Dendritic cell treated with granulocyte-macrophage colony-stimulating factor and Interleukin-4, amounts not matched to agents 40 ng/mL and 50 ng/mL, for 4 days (primary cell): ENCODE measurements at regions of chr3 and their contacts with region 1.

Region 1: GRCh38 chr3:73045391-73045790 is 16.1 kb upstream of the EBLN2 start:
- H3K4me3 Mint-ChIP-seq: no peak overlapping the region
- H3K27ac Mint-ChIP-seq: no peak overlapping the region
- H3K4me1 Mint-ChIP-seq: peaks cover 22% of the 10 kb centered on the region
- H3K27me3 Mint-ChIP-seq: no peaks in the 10 kb centered on the region

Region 2: GRCh38 chr3:72288955-72289691 is 756.3 kb before region 1 on chr3:
- intact Hi-C with region 1: no loop called
- H3K4me3 Mint-ChIP-seq: peak overlapping the region; percentile 63
- H3K27ac Mint-ChIP-seq: no peak overlapping the region
- H3K4me1 Mint-ChIP-seq: peaks cover 12% of the 10 kb centered on the region
- H3K27me3 Mint-ChIP-seq: peaks cover 73% of the 10 kb centered on the region

Region 3: DNA sequence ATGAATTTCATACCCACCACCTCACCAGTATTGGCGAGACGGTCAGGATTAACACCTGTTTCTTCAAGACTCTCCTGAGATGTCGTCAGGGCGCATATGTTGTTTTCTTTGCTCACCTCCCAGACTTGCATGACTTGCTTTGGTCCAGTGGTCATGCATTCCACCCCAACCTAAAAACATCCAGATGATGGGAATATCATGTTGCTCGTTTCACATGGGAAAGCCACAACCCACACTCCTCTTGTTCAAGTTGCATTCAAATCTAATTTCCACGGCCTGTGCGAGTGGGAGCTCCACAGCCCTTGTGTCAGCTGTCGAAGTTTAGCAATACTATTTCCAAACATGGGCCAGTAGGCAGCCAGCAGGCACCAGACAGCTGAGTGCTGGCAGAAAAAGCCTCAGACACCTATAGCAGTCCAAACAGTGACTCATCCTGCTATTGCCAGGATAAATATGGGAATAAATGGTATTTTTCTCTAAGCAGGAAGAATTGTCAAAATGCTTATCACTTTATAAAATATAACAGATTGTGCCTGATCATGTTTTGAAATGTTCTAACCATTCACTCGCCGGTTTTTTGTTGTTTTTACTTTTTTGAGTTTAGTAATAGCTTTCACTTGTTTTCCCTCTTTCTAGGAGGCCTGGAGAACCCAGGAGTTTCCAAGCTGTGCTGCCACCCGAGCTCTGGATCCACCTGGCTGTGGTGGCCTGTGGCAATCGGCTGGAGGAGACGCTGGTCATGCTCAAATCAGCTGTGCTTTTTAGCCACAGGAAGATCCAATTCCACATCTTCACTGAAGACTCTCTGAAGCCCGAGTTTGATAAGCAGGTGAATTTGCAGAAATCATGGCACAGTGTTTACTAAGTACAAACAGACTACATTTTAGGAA is 137.4 kb before region 1 on chr3:
- intact Hi-C with region 1: no loop called
- H3K4me3 Mint-ChIP-seq: no peak overlapping the region
- H3K27ac Mint-ChIP-seq: no peak overlapping the region
- H3K4me1 Mint-ChIP-seq: no peaks in the 10 kb centered on the region
- H3K27me3 Mint-ChIP-seq: no peaks in the 10 kb centered on the region

Region 4: GRCh38 chr3:73007992-73008712 is 37.2 kb before region 1 on chr3:
- intact Hi-C with region 1: loop called (anchors 5 kb)
- H3K4me3 Mint-ChIP-seq: no peak overlapping the region
- H3K27ac Mint-ChIP-seq: no peak overlapping the region
- H3K4me1 Mint-ChIP-seq: peaks cover 62% of the 10 kb centered on the region
- H3K27me3 Mint-ChIP-seq: no peaks in the 10 kb centered on the region